ENCODE measurements at regions of chr19 and their contacts with region 1.

Region 1: GRCh38 chr19:9785367-9786331 is 17.1 kb upstream of the ZNF846 start:
- DNase-seq: peak; percentile 97
- H3K4me3 ChIP-seq: peak overlapping the region; percentile 69
- H3K27ac ChIP-seq: peak overlapping the region; percentile 62
- H3K4me1 ChIP-seq: peaks cover 18% of the 10 kb centered on the region
- CTCF ChIP-seq: no peak

Region 2: DNA sequence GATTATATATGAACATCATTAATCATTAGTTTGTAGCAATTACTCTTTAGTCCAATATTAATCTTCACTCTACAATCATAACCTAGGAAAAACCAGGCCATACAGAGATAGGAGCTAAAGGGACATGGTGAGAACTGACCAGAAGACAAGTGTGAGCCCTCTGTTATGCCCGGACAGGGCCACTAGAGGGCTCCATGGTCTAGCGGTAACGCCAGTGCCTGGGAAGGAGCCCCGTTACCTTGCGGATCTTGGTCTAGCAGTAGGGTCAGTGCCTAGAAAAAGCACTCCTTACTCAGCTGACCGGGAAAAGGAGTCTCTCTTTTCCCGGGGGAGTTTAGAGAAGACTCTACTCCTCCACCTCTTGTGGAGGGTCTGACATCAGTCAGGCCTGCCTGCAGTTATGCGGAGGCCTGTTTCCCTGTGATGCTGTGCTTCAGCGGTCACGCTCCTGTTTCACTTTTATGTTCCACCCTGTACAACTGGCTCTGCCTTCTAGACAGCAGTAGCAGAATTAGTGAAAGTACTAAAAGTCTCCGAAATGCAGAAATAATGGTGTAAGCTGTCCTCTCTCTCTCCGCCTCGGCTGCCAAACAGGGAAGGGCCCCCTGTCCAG is 580.0 kb before region 1 on chr19:
- CTCF ChIA-PET with region 1: no interaction called
- POLR2A ChIA-PET with region 1: no interaction called
- intact Hi-C with region 1: loop called (anchors 1 kb)
- DNase-seq: peak; percentile 67
- H3K4me3 ChIP-seq: no peak overlapping the region
- H3K27ac ChIP-seq: no peak overlapping the region
- H3K4me1 ChIP-seq: no peaks in the 10 kb centered on the region
- CTCF ChIP-seq: peak; percentile 85

Region 3: DNA sequence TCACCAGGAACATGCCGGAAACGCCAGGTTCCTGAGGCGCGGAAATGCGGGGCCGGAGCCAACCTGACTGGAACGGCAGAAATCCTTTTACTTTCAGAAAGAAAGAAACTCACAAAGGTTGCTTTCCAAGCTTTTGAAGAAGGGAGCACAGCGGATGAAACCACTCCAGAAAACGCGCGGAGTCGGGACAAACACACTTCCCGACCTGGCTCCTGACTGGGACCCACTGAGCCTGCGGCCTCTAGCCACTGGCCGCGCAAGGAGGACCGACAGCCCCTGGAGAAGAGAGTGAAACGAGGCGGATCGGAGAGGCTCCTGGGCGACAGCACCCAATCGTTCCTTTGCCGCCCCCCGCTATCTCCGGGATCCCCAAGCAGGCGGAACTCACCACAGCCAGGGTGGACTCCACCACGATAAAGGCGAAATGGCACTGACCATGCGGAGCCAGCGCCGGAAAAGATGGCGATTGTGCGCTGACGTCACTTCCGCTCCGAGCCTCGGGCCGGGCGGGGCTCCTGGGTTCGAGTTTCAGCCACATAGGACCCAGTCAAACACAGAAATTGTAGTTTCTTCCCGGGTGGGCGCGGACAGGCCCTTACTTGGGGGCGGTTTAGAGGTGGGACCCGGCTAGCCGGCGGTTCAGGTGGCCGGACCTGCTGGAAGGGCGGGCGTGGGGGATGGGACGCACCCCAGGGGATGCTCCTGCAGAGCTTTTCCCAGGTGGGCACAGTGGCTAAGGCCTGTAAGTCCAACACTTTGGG is 201.4 kb before region 1 on chr19 and contains the start of gene ZNF121:
- CTCF ChIA-PET with region 1: no interaction called
- POLR2A ChIA-PET with region 1: interaction called, 7 read pairs
- intact Hi-C with region 1: loop called (anchors 1 kb)
- DNase-seq: peak; percentile 90
- H3K4me3 ChIP-seq: peak within 1 kb of the TSS; percentile 100
- H3K27ac ChIP-seq: peak within 1 kb of the TSS; percentile 74
- H3K4me1 ChIP-seq: peaks cover 18% of the 10 kb centered on the region
- CTCF ChIP-seq: no peak
- total RNA-seq, gene ZNF121: 55.3 and 74.4 TPM in 2 replicates

Region 4: GRCh38 chr19:9621156-9622037 is 164.3 kb before region 1 on chr19 and contains the start of gene ZNF561:
- CTCF ChIA-PET with region 1: no interaction called
- POLR2A ChIA-PET with region 1: no interaction called
- intact Hi-C with region 1: loop called (anchors 1 kb)
- DNase-seq: peak; percentile 92
- H3K4me3 ChIP-seq: peak within 1 kb of the TSS; percentile 78
- H3K27ac ChIP-seq: peak within 1 kb of the TSS; percentile 66
- H3K4me1 ChIP-seq: peaks cover 6% of the 10 kb centered on the region
- CTCF ChIP-seq: no peak
- total RNA-seq, gene ZNF561: 14.9 and 17.3 TPM in 2 replicates

Region 5: GRCh38 chr19:9658769-9659168 is 126.9 kb before region 1 on chr19:
- CTCF ChIA-PET with region 1: no interaction called
- POLR2A ChIA-PET with region 1: no interaction called
- intact Hi-C with region 1: no loop called
- DNase-seq: no peak
- H3K4me3 ChIP-seq: no peak overlapping the region
- H3K27ac ChIP-seq: no peak overlapping the region
- H3K4me1 ChIP-seq: no peaks in the 10 kb centered on the region
- CTCF ChIP-seq: no peak

Region 6: DNA sequence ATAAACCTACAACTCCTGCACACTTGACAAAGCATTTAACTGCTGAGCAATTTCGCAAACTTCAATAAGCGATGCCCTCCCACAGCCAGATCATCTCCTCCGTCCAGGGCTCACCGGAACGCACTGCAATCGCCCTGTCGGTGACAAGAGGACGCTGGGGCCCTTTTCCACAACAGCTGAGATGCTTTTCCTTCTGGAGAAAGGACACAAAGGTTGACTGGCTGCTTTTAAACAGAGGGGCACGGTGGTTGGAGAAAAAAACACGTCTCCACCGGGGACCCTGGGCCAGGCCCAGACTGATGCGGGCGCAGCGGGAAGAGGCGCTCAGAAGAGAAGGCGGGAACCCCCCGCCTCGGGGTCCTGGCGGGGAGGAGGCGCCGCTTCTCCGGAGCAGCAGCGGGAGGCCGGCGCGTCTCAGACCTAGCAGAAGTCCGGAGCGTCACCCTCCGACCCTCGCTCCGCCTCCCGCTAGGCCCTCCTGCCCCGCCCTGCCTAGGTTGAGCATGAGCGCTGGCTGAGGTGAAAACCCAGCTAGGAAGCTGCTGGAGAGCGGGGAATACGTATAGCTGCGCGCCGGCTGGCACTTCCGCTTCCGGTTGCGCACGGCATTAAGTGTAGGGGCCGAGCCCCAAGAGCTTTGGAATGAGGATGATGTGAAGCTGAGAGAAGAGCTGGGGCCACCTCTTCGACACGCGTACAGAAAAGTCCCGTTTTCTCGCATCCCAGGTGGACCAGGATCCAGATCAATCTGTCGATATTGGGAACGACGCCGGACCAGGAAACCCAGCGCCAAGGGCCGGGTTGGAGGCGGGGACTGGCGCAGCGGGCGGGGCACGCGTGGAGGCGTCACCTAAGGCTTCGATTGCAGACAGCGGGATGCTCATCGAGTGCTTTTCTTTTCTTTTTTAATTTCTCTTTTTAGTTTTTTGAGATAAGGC is 17.2 kb before region 1 on chr19 and contains the start of gene ZNF846:
- CTCF ChIA-PET with region 1: no interaction called
- POLR2A ChIA-PET with region 1: interaction called, 5 read pairs
- intact Hi-C with region 1: loop called (anchors 1 kb)
- DNase-seq: peak; percentile 98
- H3K4me3 ChIP-seq: peak within 1 kb of the TSS; percentile 82
- H3K27ac ChIP-seq: peak within 1 kb of the TSS; percentile 77
- H3K4me1 ChIP-seq: peaks cover 15% of the 10 kb centered on the region
- CTCF ChIP-seq: no peak
- total RNA-seq, gene ZNF846: 10.6 and 11.7 TPM in 2 replicates

Region 7: DNA sequence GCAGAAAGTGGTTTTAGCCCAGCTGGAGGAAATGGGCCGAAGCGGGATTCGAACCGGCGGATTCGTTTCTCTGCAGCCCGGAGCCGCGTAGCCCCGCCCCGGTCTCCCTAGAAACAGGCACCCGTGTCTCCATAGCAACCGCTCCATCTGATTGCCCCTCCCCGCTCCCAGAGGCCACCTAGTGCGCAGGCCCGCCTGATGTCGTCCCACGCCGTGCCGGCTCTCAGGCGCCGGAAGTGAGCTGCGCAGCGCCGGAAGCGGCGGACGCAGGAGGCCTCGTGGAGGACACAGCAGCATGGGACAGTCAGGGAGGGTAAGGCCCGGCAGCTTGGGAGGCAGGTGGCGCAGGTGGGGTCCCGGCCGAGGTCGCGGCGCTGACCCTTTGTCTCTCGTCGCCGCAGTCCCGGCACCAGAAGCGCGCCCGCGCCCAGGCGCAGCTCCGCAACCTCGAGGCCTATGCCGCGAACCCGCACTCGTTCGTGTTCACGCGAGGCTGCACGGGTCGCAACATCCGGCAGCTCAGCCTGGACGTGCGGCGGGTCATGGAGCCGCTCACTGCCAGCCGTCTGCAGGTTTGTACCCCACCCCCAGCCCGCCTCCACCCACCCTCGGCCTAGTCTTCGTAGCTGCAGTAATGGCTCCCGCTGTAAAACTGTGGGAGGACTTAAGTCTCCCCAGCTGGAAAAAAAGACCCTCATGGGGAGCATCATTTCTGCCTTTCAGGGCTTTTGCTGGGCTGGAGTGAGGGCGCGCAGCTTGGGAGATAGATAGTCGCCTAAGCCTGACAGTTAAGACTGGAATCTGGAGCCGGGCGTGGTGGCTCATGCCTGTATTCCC is 320.7 kb after region 1 on chr19 and contains the start of gene PPAN:
- CTCF ChIA-PET with region 1: no interaction called
- POLR2A ChIA-PET with region 1: no interaction called
- intact Hi-C with region 1: no loop called
- DNase-seq: peak; percentile 100
- H3K4me3 ChIP-seq: peak within 1 kb of the TSS; percentile 99
- H3K27ac ChIP-seq: peak within 1 kb of the TSS; percentile 84
- H3K4me1 ChIP-seq: peaks cover 59% of the 10 kb centered on the region
- CTCF ChIP-seq: no peak
- total RNA-seq, gene PPAN: 77.1 and 85.8 TPM in 2 replicates